Ascending aorta (tissue), 2 donors: ENCODE measurements at regions of chr14 and their contacts with region 1.

Region 1: DNA sequence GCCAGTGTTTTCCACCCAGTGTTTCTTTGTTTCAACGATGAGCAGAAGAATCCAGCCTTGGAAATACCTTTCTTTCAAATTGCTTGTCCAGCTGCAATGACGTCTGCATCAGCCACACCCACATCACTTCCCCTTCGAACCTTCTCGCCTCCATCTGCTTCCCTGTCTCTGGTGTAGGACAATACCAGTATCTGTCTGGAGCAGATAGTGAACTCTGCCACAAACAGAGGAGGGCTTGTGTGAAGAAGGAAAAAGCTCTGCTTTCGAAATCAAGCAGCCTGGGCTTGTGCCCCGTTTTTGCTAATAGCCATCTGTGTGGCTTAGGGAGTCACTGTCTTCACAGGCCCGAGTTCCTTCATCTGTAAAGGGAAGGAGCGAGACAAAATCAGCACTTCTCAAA is 415.4 kb downstream of the ZFP36L1 start:
- DNase-seq: peak; percentile 33 to 82
- H3K4me3 ChIP-seq: no peak overlapping the region
- H3K27ac ChIP-seq: peak overlapping the region; percentile 51 to 62
- H3K4me1 ChIP-seq: peaks cover 0 to 30% of the 10 kb centered on the region in 2 donors
- H3K27me3 ChIP-seq: no peaks in the 10 kb centered on the region
- CTCF ChIP-seq: no peak

Region 2: GRCh38 chr14:68307014-68307789 is 70.3 kb before region 1 on chr14:
- intact Hi-C with region 1: loop called (anchors 5 kb)
- DNase-seq: peak in 1 of 2 donors; percentile 67
- H3K4me3 ChIP-seq: no peak overlapping the region
- H3K27ac ChIP-seq: peak overlapping the region; percentile 68 to 72
- H3K4me1 ChIP-seq: peaks cover 0 to 22% of the 10 kb centered on the region in 2 donors
- H3K27me3 ChIP-seq: no peaks in the 10 kb centered on the region
- CTCF ChIP-seq: no peak

Region 3: DNA sequence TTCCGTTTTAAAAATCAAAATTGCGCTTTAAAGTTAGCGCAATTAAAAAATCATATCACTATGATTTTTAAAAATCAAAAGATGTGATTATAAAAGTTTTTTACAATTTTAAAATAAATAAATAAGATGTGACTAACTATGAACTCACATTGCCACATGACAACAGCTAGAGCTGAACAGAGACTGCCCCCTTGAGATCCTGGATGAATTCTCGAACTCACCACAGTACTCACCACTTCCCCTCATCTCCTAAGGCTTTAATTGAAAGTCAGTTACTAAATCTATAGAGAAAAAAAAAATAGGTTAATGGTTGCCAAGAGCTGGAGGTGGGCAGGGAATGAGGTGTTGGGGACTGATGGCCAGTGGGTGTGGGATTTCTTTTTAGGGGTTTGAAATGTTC is 31.2 kb after region 1 on chr14:
- intact Hi-C with region 1: no loop called
- DNase-seq: no peak
- H3K4me3 ChIP-seq: no peak overlapping the region
- H3K27ac ChIP-seq: no peak overlapping the region
- H3K4me1 ChIP-seq: peaks cover 0 to 5% of the 10 kb centered on the region in 2 donors
- H3K27me3 ChIP-seq: no peaks in the 10 kb centered on the region
- CTCF ChIP-seq: peak in 1 of 3 experiments; percentile 15

Region 4: DNA sequence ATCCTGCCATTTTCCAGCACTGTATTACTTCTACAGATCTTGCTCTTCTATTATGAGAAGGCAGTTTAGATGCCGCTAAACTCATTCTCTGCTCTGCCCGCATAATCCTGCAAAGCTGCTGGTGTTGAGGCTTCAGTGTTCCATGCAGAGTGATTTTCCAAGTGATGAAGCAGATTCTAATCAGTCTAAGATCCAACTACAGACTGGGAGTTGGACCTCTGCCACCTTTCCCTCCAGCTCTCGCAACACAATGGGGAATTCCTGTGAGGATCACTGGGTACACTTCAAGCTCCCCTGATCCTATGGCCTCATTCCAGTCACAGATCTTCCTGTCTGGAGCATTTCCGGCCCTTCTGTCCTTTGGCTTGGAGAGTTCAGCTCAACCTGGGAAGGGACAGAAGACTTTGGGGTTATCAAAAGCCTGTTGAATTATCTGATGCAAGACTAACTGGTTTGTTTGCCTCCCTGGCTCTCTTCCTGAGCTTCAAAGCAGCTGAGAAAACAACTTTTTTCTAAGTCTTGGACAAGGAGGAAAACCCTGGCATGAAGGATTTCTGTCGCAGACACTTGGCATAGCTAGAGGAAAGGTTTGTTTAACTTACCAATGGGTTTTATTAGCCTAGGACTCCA is 81.5 kb after region 1 on chr14:
- intact Hi-C with region 1: no loop called
- DNase-seq: peak in 1 of 2 donors; percentile 82
- H3K4me3 ChIP-seq: no peak overlapping the region
- H3K27ac ChIP-seq: peak overlapping the region; percentile 89 to 91
- H3K4me1 ChIP-seq: peaks cover 10 to 23% of the 10 kb centered on the region in 2 donors
- H3K27me3 ChIP-seq: no peaks in the 10 kb centered on the region
- CTCF ChIP-seq: no peak